ENCODE measurements at regions of chr12 and their contacts with region 1.

Region 1: GRCh38 chr12:1939801-1940607 is 21.6 kb upstream of the CACNA2D4 start:
- DNase-seq: peak; percentile 81 to 96 (median 90)
- ATAC-seq: peak; percentile 100
- H3K4me3 ChIP-seq: no peak overlapping the region
- H3K4me3 Mint-ChIP-seq: no peak overlapping the region
- H3K27ac ChIP-seq: no peak overlapping the region
- H3K27ac Mint-ChIP-seq: no peak overlapping the region
- H3K4me1 ChIP-seq: peaks cover 5% of the 10 kb centered on the region
- H3K4me1 Mint-ChIP-seq: peaks cover 4% of the 10 kb centered on the region
- H3K27me3 ChIP-seq: no peaks in the 10 kb centered on the region
- H3K27me3 Mint-ChIP-seq: no peaks in the 10 kb centered on the region
- CTCF ChIP-seq: peak; percentile 92

Region 2: DNA sequence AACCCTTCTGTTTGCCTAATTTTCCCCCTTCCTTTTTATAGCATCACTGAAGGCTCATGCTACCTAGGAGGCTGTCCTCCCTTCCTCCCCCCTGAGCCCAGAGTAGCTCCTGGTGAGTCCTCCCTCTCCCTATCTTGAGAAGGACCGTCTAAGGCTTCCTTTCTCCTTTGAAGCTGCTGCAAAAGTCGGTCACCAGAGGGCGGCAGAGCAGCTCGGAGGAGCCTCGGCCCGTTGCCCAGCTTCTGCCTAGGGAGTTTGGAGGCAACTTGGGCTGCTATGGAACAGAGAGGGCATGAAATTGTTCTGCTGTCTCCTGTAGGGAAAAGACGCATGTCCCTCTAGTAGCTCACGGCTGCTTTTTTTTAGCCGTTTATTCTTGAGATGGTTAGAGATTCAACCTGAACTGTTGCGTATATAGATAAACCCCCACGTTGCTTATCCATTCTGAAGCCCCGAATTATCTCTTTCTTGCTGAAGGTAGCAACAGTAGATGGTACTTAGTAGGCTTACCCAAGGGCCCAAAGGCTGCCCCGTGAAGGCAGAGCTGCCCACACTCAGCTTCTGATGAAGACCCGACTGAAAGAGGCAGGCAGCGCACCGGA is 305.3 kb before region 1 on chr12:
- CTCF ChIA-PET with region 1: interaction called, 26 read pairs
- POLR2A ChIA-PET with region 1: no interaction called
- intact Hi-C with region 1: loop called (anchors 1 kb)
- DNase-seq: peak; percentile 18 to 71 (median 64)
- ATAC-seq: peak; percentile 52
- H3K4me3 ChIP-seq: no peak overlapping the region
- H3K4me3 Mint-ChIP-seq: no peak overlapping the region
- H3K27ac ChIP-seq: no peak overlapping the region
- H3K27ac Mint-ChIP-seq: no peak overlapping the region
- H3K4me1 ChIP-seq: peaks cover 13% of the 10 kb centered on the region
- H3K4me1 Mint-ChIP-seq: peaks cover 13% of the 10 kb centered on the region
- H3K27me3 ChIP-seq: peaks cover 12 to 21% of the 10 kb centered on the region in 2 experiments
- H3K27me3 Mint-ChIP-seq: peaks cover 42% of the 10 kb centered on the region
- CTCF ChIP-seq: peak; percentile 70

Region 3: GRCh38 chr12:1661553-1662335 is 278.3 kb before region 1 on chr12:
- CTCF ChIA-PET with region 1: interaction called, 136 read pairs
- POLR2A ChIA-PET with region 1: interaction called, 5 read pairs
- intact Hi-C with region 1: no loop called
- DNase-seq: peak; percentile 63 to 95 (median 78)
- ATAC-seq: peak; percentile 74
- H3K4me3 ChIP-seq: peak overlapping the region; percentile 50 to 52
- H3K4me3 Mint-ChIP-seq: peak overlapping the region; percentile 78
- H3K27ac ChIP-seq: peak overlapping the region in 1 of 2 experiments; percentile 56
- H3K27ac Mint-ChIP-seq: peak overlapping the region; percentile 74
- H3K4me1 ChIP-seq: peaks cover 17% of the 10 kb centered on the region
- H3K4me1 Mint-ChIP-seq: peaks cover 43% of the 10 kb centered on the region
- H3K27me3 ChIP-seq: no peaks in the 10 kb centered on the region
- H3K27me3 Mint-ChIP-seq: no peaks in the 10 kb centered on the region
- CTCF ChIP-seq: no peak

Region 4: GRCh38 chr12:1804545-1805332 is 135.3 kb before region 1 on chr12:
- CTCF ChIA-PET with region 1: interaction called, 71 read pairs
- POLR2A ChIA-PET with region 1: no interaction called
- intact Hi-C with region 1: no loop called
- DNase-seq: peak; percentile 69 to 93 (median 87)
- ATAC-seq: peak; percentile 97
- H3K4me3 ChIP-seq: no peak overlapping the region
- H3K4me3 Mint-ChIP-seq: no peak overlapping the region
- H3K27ac ChIP-seq: peak overlapping the region in 1 of 2 experiments; percentile 66
- H3K27ac Mint-ChIP-seq: peak overlapping the region; percentile 73
- H3K4me1 ChIP-seq: peaks cover 6% of the 10 kb centered on the region
- H3K4me1 Mint-ChIP-seq: peaks cover 10% of the 10 kb centered on the region
- H3K27me3 ChIP-seq: no peaks in the 10 kb centered on the region
- H3K27me3 Mint-ChIP-seq: no peaks in the 10 kb centered on the region
- CTCF ChIP-seq: no peak

Region 5: DNA sequence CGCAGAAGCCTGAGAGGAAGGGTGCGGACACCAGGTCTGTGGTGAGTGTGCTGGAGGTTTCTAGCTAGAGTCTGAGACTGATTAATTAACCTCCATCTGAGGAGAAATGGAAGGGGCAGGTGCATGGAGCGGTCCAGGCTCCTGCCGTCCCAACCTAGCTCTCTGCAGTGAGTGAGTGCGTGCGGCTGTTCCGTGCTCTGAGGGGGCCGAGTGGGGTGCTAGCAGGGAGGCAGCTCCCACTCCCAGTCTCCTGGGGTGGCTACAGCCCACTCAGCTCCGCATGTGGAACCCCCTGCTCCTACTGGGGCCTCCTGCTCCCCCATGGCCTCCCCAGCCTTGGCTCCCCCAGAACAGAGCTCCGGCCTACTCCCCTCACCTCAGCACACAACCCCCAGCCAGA is 116.8 kb before region 1 on chr12:
- CTCF ChIA-PET with region 1: interaction called, 10 read pairs
- POLR2A ChIA-PET with region 1: no interaction called
- intact Hi-C with region 1: no loop called
- DNase-seq: no peak
- ATAC-seq: no peak
- H3K4me3 ChIP-seq: no peak overlapping the region
- H3K4me3 Mint-ChIP-seq: no peak overlapping the region
- H3K27ac ChIP-seq: no peak overlapping the region
- H3K27ac Mint-ChIP-seq: no peak overlapping the region
- H3K4me1 ChIP-seq: no peaks in the 10 kb centered on the region
- H3K4me1 Mint-ChIP-seq: no peaks in the 10 kb centered on the region
- H3K27me3 ChIP-seq: no peaks in the 10 kb centered on the region
- H3K27me3 Mint-ChIP-seq: peaks cover 31% of the 10 kb centered on the region
- CTCF ChIP-seq: no peak

Region 6: DNA sequence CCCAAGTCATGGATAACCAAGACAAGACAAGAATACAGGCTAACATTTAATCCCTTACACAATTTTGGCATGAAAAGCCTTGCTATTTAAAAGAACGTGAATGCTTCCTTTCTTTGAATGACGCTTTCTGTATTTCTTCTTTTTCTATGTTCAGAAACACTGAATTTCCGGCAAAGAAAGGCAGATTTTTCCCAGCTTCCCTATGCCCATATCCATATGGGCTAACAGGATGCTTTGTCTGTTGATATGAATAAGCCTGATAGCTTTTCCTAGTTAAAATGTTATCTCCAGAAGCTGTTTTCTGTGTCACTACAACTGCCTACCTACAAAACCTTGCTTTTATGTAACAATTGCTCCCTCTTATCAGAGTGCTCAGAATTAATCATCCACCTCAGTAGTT is 16.7 kb after region 1 on chr12:
- CTCF ChIA-PET with region 1: interaction called, 14 read pairs
- POLR2A ChIA-PET with region 1: no interaction called
- intact Hi-C with region 1: no loop called
- DNase-seq: no peak
- ATAC-seq: no peak
- H3K4me3 ChIP-seq: no peak overlapping the region
- H3K4me3 Mint-ChIP-seq: no peak overlapping the region
- H3K27ac ChIP-seq: no peak overlapping the region
- H3K27ac Mint-ChIP-seq: no peak overlapping the region
- H3K4me1 ChIP-seq: no peaks in the 10 kb centered on the region
- H3K4me1 Mint-ChIP-seq: no peaks in the 10 kb centered on the region
- H3K27me3 ChIP-seq: no peaks in the 10 kb centered on the region
- H3K27me3 Mint-ChIP-seq: no peaks in the 10 kb centered on the region
- CTCF ChIP-seq: no peak

Region 7: DNA sequence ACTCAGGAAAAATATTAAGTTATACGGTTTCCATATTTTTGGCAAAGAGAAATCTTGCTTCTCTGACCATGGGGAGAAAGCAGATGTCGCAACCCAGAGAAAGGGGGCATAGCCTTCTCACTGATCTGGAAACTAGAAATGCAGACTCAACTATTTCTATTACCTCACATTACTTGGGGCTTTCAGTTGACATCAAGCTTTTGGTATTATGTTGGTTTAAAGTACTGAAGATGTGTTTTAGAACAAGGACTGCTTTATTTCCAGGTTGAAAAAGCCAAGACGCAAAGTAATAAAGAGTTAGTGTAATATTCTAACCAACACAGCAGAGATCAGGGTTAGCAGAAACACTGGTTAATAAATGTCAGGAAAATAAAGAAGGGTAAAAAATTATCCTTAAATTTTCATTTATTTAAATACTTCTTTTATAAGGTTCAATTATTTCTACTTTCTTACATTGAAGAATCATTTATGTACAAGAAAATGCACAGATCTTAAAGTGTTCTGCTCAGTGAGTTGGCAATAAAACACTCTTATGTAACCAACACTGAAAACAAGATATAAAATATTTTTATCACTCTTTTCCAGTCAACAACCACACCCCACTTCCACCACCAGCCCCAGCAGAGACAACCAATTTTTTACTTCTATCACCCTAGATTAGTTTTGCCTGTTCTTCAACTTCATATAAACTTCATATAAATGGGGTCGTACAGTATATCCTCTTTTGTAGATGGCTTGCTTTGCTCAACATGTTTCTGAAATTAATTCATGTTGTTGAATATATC is 38.3 kb after region 1 on chr12:
- CTCF ChIA-PET with region 1: no interaction called
- POLR2A ChIA-PET with region 1: no interaction called
- intact Hi-C with region 1: no loop called
- DNase-seq: no peak
- ATAC-seq: no peak
- H3K4me3 ChIP-seq: no peak overlapping the region
- H3K4me3 Mint-ChIP-seq: no peak overlapping the region
- H3K27ac ChIP-seq: no peak overlapping the region
- H3K27ac Mint-ChIP-seq: no peak overlapping the region
- H3K4me1 ChIP-seq: no peaks in the 10 kb centered on the region
- H3K4me1 Mint-ChIP-seq: peaks cover 6% of the 10 kb centered on the region
- H3K27me3 ChIP-seq: no peaks in the 10 kb centered on the region
- H3K27me3 Mint-ChIP-seq: no peaks in the 10 kb centered on the region
- CTCF ChIP-seq: no peak

Region 8: GRCh38 chr12:1993871-1994371 is 53.9 kb after region 1 on chr12:
- CTCF ChIA-PET with region 1: no interaction called
- POLR2A ChIA-PET with region 1: no interaction called
- intact Hi-C with region 1: no loop called
- DNase-seq: peak in 3 of 9 experiments; percentile 9 to 79 (median 66)
- ATAC-seq: peak; percentile 78
- H3K4me3 ChIP-seq: no peak overlapping the region
- H3K4me3 Mint-ChIP-seq: no peak overlapping the region
- H3K27ac ChIP-seq: peak overlapping the region; percentile 40 to 79
- H3K27ac Mint-ChIP-seq: peak overlapping the region; percentile 86
- H3K4me1 ChIP-seq: peaks cover 15% of the 10 kb centered on the region
- H3K4me1 Mint-ChIP-seq: peaks cover 45% of the 10 kb centered on the region
- H3K27me3 ChIP-seq: no peaks in the 10 kb centered on the region
- H3K27me3 Mint-ChIP-seq: no peaks in the 10 kb centered on the region
- CTCF ChIP-seq: no peak

Region 9: GRCh38 chr12:2034633-2035430 is 94.8 kb after region 1 on chr12:
- CTCF ChIA-PET with region 1: interaction called, 6 read pairs
- POLR2A ChIA-PET with region 1: no interaction called
- intact Hi-C with region 1: loop called in 1 of 2 experiments (anchors 1 kb)
- DNase-seq: peak; percentile 72 to 91 (median 83)
- ATAC-seq: peak; percentile 99
- H3K4me3 ChIP-seq: peak overlapping the region; percentile 49 to 51
- H3K4me3 Mint-ChIP-seq: peak overlapping the region; percentile 66
- H3K27ac ChIP-seq: no peak overlapping the region
- H3K27ac Mint-ChIP-seq: no peak overlapping the region
- H3K4me1 ChIP-seq: peaks cover 12% of the 10 kb centered on the region
- H3K4me1 Mint-ChIP-seq: peaks cover 15% of the 10 kb centered on the region
- H3K27me3 ChIP-seq: no peaks in the 10 kb centered on the region
- H3K27me3 Mint-ChIP-seq: peaks cover 29% of the 10 kb centered on the region
- CTCF ChIP-seq: peak; percentile 88

Region 10: DNA sequence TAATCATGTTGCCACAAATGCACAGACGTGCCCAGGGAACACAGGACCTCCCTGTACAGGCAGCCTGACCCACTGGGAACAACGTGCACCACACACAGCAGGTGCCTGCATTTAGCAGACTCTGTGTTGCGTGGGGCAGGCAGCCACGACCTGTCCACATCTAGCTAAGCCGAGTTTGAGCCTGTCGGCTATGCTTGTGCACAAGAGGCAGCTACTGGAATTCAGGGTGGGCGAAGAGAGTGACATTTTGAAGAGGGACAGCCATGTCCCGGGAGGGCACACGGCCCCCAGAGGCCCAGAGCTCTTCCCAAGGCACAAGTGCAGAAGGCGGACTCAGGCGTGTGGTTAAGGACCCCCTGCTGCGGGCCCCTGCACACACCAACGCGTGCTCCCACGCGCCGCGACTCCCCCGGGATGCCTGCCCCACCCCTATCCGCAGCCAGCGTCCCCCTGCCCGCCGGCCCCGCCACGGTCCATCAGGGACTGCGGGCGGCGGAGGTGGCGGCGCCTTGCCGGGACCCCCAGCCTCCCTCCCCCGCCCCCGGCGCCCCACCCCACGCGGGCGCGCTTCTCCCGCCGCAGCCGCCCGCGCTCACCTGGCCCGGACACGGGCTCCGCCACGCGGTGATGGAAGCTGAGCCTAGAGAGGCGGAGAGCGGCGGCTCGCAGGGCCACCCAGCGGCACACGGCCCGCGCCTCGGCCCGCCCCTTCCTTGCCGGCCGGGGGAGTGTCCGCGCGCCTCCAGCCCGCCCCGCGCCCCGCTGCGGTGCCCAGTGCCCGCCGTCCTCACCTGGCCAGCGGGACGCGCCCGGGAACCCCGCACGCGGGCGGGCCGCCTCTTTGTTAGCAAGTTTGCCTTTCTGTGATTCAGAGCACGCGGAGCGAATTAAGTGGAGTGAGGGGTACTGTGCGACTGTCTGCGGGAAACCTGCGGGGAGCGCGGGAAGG is 1425.7 kb after region 1 on chr12:
- CTCF ChIA-PET with region 1: no interaction called
- POLR2A ChIA-PET with region 1: no interaction called
- intact Hi-C with region 1: no loop called
- DNase-seq: no peak
- ATAC-seq: no peak
- H3K4me3 ChIP-seq: no peak overlapping the region
- H3K4me3 Mint-ChIP-seq: no peak overlapping the region
- H3K27ac ChIP-seq: no peak overlapping the region
- H3K27ac Mint-ChIP-seq: no peak overlapping the region
- H3K4me1 ChIP-seq: no peaks in the 10 kb centered on the region
- H3K4me1 Mint-ChIP-seq: peaks cover 1% of the 10 kb centered on the region
- H3K27me3 ChIP-seq: peaks cover 2 to 3% of the 10 kb centered on the region in 2 experiments
- H3K27me3 Mint-ChIP-seq: peaks cover 23% of the 10 kb centered on the region
- CTCF ChIP-seq: no peak

Measured in CD8-positive, alpha-beta T cell (primary cell).